ENCODE measurements at regions of chr6 and their contacts with region 1.

Region 1: DNA sequence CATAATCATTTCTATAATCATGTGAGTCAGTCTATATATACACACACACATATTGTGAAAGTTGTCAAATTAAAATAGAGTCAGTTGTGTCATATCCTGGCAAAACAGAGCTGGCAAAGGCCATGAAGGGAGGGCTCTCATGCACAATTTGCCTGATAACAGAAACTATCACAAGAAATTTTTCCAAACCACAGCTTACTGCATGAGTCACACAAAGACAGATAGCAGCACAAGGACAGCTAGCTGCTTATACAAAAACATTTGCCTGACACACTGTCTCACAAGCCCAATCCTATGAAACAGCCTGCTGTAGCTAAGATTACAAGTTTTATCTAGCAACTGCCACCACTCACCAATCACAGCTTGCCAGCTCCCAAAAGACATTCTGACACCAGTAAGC is 848.5 kb upstream of the MAN1A1 start:
- DNase-seq: no peak
- CTCF ChIP-seq: no peak

Region 2: GRCh38 chr6:120182616-120183015 is 15.4 kb before region 1 on chr6:
- CTCF ChIA-PET with region 1: interaction called, 10 read pairs
- POLR2A ChIA-PET with region 1: no interaction called
- DNase-seq: no peak
- CTCF ChIP-seq: no peak

Region 3: GRCh38 chr6:120211955-120212792 is 14.1 kb after region 1 on chr6:
- CTCF ChIA-PET with region 1: no interaction called
- POLR2A ChIA-PET with region 1: no interaction called
- DNase-seq: no peak
- CTCF ChIP-seq: no peak

Region 4: GRCh38 chr6:120805276-120805675 is 607.2 kb after region 1 on chr6:
- CTCF ChIA-PET with region 1: no interaction called
- POLR2A ChIA-PET with region 1: no interaction called
- DNase-seq: no peak
- CTCF ChIP-seq: no peak

Measured in GM10248 (cell line).